ENCODE measurements at regions of chr4 and their contacts with region 1.

Region 1: GRCh38 chr4:88523325-88524129 is at the start of gene PYURF:
- DNase-seq: peak; percentile 67
- H3K4me3 Mint-ChIP-seq: peak within 1 kb of the TSS; percentile 98
- H3K27ac Mint-ChIP-seq: peak within 1 kb of the TSS; percentile 96
- H3K4me1 Mint-ChIP-seq: peaks cover 49% of the 10 kb centered on the region
- H3K27me3 Mint-ChIP-seq: no peaks in the 10 kb centered on the region
- total RNA-seq, gene PYURF: 51.2 and 52.8 TPM in 2 replicates

Region 2: DNA sequence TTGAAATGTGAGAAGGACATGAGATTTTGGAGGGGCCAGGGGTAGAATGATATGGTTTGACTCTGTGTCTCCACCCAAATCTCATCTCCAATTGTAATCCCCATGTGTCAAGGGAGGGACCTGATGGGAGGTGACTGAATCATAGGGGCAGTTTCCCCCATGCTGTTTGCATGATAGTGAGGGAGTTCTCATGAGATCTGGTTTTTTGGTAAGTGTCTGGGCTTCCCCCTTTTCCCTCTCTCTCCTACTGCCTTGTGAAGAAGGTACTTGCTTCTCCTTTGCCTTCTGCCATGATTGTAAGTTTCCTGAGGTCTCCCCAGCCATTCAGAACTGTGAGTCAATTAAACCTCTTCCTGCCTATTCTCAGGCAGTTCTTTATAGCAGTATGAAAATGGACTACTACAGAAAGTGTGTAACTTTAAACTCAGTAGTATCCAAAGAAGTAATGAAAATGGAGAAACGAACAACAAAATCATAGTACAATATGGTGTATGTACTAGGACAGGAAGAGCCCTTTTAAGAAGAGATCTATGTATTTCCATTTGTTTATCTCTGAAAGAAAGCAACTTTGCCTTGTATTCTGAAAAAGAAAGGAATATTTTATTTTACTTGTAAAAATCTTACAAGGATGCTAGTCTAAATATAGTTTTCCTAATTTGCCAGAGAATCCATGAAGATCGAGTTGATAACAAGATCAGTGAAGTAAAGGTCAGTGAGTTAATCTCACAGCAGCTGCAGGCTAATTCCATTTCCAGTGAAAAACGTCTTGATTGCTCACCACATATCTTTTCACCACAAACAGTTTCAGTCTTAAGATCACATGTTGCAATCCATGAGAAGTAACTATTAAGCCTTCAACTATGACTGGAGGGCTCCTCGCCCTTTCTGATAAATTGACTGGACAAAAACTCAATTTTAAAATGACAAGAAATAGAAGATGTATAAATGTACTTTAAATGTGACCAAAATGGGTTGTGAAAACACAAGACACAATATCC is 495.6 kb before region 1 on chr4:
- intact Hi-C with region 1: loop called (anchors 2 kb)
- DNase-seq: no peak
- H3K4me3 Mint-ChIP-seq: no peak overlapping the region
- H3K27ac Mint-ChIP-seq: peak overlapping the region; percentile 76
- H3K4me1 Mint-ChIP-seq: peaks cover 29% of the 10 kb centered on the region
- H3K27me3 Mint-ChIP-seq: no peaks in the 10 kb centered on the region

Region 3: GRCh38 chr4:88378691-88379559 is 144.6 kb before region 1 on chr4 and contains the start of gene HERC6:
- intact Hi-C with region 1: loop called (anchors 2 kb)
- DNase-seq: peak; percentile 83
- H3K4me3 Mint-ChIP-seq: peak within 1 kb of the TSS; percentile 83
- H3K27ac Mint-ChIP-seq: peak within 1 kb of the TSS; percentile 71
- H3K4me1 Mint-ChIP-seq: peaks cover 32% of the 10 kb centered on the region
- H3K27me3 Mint-ChIP-seq: no peaks in the 10 kb centered on the region
- total RNA-seq, gene HERC6: 3.3 and 3.7 TPM in 2 replicates

Region 4: DNA sequence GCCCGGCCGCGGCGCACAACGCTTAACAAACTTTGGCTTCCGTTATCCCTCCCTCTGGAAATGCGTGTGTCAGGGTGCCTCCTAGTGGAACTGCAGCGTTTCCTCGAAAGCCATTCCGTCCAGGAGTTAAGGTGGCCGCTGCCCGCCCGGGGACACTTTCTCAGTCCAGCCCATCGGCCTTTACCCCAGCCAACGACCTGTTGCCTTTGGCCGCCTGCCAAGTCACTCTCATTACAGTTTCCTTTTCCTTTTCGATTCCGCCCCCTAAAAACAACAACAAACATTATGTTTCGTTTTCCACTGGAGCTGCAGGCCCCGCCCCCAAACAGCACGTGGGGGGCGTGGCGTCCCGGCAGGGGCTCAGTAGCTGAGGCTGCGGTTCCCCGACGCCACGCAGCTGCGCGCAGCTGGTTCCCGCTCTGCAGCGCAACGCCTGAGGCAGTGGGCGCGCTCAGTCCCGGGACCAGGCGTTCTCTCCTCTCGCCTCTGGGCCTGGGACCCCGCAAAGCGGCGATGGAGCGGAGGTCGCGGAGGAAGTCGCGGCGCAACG is 66.7 kb before region 1 on chr4 and contains the start of gene HERC5:
- intact Hi-C with region 1: loop called (anchors 5 kb)
- DNase-seq: peak; percentile 91
- H3K4me3 Mint-ChIP-seq: peak within 1 kb of the TSS; percentile 99
- H3K27ac Mint-ChIP-seq: peak within 1 kb of the TSS; percentile 100
- H3K4me1 Mint-ChIP-seq: peaks cover 26% of the 10 kb centered on the region
- H3K27me3 Mint-ChIP-seq: peaks cover 5% of the 10 kb centered on the region
- total RNA-seq, gene HERC5: 8.4 and 10.2 TPM in 2 replicates

Region 5: DNA sequence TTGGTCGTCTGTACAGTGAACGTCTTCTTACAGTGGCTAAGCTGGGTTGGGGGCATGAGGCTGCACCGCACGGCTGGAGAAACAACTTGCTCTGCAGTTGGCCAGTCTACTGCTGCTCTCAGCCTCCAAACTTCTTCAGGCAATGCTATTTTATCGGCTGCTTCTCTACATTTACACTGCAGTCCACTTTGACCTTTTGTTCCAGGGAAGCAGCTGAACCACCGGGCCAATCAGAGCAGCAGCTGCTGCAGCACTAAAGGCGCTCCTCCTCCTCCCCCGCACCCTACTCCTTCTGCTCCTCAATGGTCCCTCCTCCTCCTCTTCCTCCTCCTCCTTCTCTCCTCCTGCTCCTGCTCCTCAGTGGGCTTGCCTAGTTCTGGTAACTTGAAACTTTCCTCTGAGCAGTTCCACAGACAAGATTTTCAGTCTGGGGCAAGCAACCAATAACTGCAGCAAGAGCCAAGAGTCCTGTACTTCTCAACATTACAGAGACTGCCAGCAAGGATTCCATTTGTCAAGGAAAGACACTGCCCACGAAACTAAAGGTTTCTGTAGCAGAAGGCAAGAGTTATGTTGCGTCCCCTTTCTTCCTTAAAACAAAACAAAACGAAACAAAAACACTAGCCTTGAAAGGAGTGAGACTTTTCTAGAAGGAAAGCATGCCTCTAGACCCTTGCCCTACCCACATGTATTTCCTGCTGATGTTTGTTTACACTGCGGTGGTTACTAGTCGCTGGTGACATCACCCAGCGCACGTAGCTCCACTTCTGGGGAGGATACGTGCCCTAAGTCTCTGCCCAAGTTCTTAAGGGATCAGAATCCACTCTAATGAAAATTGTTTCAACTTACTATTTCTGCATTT is 299.8 kb after region 1 on chr4:
- intact Hi-C with region 1: loop called (anchors 5 kb)
- DNase-seq: peak; percentile 71
- H3K4me3 Mint-ChIP-seq: peak overlapping the region; percentile 91
- H3K27ac Mint-ChIP-seq: peak overlapping the region; percentile 97
- H3K4me1 Mint-ChIP-seq: peaks cover 41% of the 10 kb centered on the region
- H3K27me3 Mint-ChIP-seq: peaks cover 1% of the 10 kb centered on the region

Region 6: DNA sequence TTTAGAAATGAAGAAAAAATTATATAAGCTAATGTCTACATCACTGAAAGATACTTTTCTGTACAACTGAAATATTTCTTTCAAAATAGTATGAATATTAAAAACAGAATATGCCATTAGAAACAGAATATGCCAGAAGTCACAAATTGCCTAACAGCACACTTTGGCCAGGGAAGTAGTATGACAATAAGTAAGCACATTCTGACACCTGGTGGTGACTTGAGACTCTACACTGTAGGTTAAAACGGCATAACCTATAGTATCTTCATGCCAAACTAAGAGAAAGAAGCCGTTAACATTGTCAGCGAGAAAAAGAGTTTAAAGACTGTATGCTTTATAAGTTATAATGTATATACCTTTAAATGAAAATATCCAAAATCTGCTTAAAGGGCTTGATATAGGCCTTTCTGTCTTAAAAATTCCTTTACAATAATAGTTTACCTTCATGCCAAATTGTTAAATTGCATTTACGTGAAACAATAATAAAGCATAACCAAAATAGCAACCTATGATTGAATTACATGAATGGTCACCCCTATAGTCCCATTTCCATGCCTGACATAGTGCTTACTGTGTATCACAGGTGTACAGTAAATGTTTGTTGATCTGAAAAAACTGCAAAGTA is 500.6 kb after region 1 on chr4:
- intact Hi-C with region 1: loop called (anchors 1 kb)
- DNase-seq: peak; percentile 14
- H3K4me3 Mint-ChIP-seq: no peak overlapping the region
- H3K27ac Mint-ChIP-seq: no peak overlapping the region
- H3K4me1 Mint-ChIP-seq: no peaks in the 10 kb centered on the region
- H3K27me3 Mint-ChIP-seq: peaks cover 2% of the 10 kb centered on the region

Region 7: DNA sequence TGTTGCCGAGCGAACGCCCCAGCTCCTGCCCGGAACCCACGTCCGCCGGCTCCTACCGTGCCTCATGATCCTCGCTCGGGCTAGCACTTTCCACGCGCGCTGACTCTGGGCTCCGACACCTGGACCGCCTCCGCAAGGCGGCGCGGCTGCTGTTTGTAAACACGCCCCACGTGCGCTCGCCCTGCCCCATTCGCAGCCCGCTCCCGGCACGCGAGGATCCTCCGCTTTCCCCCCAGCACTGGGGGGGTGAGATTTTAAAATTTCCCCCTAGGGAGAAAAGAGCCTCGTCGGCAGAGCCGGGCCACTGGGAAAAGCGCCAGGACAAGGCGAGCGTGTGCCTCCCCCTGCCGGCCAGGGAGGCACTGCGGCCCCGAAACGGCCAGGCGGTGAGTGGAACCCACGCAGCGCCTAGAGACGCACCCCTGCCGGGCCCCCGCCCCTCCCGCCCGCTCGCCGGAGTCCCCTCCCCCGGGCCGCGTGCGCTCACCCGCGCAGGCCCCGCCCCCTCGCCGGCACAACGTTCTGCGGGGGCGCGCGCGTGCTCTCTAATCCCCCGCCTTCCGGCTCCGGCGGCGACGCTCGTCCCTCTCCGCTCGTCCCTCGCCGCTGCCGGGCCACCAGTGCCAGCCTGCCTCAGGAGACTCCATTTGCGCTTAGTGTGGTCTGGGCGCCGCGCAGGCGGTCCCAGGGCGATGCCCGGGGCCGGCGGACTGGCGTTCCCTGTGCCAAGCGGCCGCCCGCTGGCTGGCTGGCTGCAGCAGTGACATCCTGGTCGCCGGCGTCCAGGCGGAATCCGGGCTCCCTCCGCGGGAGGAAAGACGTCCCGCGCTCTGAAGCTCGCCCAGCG is 587.7 kb after region 1 on chr4 and contains the start of gene TIGD2:
- intact Hi-C with region 1: loop called (anchors 5 kb)
- DNase-seq: peak; percentile 80
- H3K4me3 Mint-ChIP-seq: peak within 1 kb of the TSS; percentile 84
- H3K27ac Mint-ChIP-seq: peak within 1 kb of the TSS; percentile 42
- H3K4me1 Mint-ChIP-seq: peaks cover 17% of the 10 kb centered on the region
- H3K27me3 Mint-ChIP-seq: peaks cover 22% of the 10 kb centered on the region
- total RNA-seq, gene TIGD2: 2.6 and 3.0 TPM in 2 replicates

Measured in activated T-helper 2 cell treated with anti-CD3 and anti-CD28 coated beads, Interferon-gamma antibody, Interleukin-2, Interleukin-4, amounts not matched to agents 10 μg/mL and 5 μg/mL and 100 μg/mL, durations not matched to agents 14 hours and 24 hours and 36 hours (primary cell).